CD14-positive monocyte (primary cell): ENCODE measurements at regions of chr14 and their contacts with region 1.

Region 1: GRCh38 chr14:104708606-104709268 is 15.3 kb upstream of the ADSS1 start:
- DNase-seq: peak; percentile 45 to 62 (median 61)
- H3K4me3 ChIP-seq: no peak overlapping the region
- H3K4me3 Mint-ChIP-seq: no peak overlapping the region
- H3K27ac ChIP-seq: no peak overlapping the region
- H3K27ac Mint-ChIP-seq: no peak overlapping the region
- H3K4me1 ChIP-seq: peaks cover 0 to 10% of the 10 kb centered on the region in 2 donors
- H3K4me1 Mint-ChIP-seq: peaks cover 1% of the 10 kb centered on the region
- H3K27me3 ChIP-seq: no peaks in the 10 kb centered on the region
- H3K27me3 Mint-ChIP-seq: peaks cover 0 to 1% (median 0%) of the 10 kb centered on the region in 3 donors
- CTCF ChIP-seq: peak; percentile 98

Region 2: DNA sequence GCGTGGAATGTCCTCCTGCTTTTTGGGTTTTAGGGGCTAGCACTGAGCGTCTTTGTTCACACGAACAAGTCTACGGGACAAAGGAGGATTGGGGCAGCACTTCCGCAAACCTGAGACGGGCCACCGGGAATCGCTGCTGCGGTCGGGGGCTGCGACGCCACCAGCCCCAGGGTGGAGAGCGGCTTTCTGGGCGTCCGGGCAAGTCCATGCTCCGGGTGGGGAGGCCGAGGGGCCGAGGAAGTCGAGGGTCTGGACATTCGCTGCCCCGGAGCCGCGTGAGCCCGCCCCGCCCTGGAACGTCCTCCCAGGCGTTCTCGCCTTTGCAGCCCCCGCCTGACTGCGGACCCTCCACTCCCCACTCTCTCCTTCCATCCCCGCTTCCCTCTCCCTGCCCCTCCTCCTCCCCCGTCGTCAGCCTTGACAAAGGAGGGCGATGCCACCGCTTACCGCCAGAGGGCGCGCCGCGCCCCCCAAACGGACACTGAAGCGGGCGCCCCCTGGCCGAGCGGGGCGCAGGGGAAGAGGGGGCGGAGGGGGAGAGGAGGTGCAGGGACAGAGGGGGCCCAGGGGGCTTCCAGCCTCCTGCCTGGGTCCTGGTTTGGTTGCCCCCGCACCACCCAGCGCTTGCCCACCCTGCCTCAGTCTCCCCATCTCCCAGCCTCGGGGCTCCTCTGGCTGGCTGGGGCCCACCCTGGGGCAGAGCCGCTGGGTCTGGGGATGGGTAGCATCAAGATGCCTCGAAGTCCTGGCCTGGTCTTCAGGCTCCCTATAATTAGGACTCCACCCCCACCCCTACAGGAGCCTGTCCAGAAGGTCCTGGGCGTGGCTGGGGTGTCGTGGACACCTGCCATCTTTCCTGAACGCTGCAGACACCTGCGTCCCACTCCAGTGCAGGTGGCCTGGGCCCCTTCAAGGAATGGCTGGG is 58.4 kb before region 1 on chr14:
- intact Hi-C with region 1: loop called (anchors 1 to 2 kb)
- DNase-seq: peak; percentile 15 to 42 (median 20)
- H3K4me3 ChIP-seq: peak overlapping the region; percentile 23 to 72 (median 47)
- H3K4me3 Mint-ChIP-seq: peak overlapping the region; percentile 65 to 84
- H3K27ac ChIP-seq: peak overlapping the region in 1 of 2 donors; percentile 4
- H3K27ac Mint-ChIP-seq: no peak overlapping the region
- H3K4me1 ChIP-seq: peaks cover 30% of the 10 kb centered on the region in 2 donors
- H3K4me1 Mint-ChIP-seq: peaks cover 21% of the 10 kb centered on the region
- H3K27me3 ChIP-seq: no peaks in the 10 kb centered on the region
- H3K27me3 Mint-ChIP-seq: peaks cover 0 to 3% (median 2%) of the 10 kb centered on the region in 3 donors
- CTCF ChIP-seq: peak; percentile 99

Region 3: GRCh38 chr14:104665657-104666522 is 42.8 kb before region 1 on chr14:
- intact Hi-C with region 1: loop called (anchors 1 to 5 kb)
- DNase-seq: peak in 2 of 3 donors; percentile 9 to 26
- H3K4me3 ChIP-seq: no peak overlapping the region
- H3K4me3 Mint-ChIP-seq: peak overlapping the region; percentile 53 to 63
- H3K27ac ChIP-seq: no peak overlapping the region
- H3K27ac Mint-ChIP-seq: peak overlapping the region in 1 of 7 donors; percentile 1
- H3K4me1 ChIP-seq: peaks cover 0 to 8% of the 10 kb centered on the region in 2 donors
- H3K4me1 Mint-ChIP-seq: peaks cover 7% of the 10 kb centered on the region
- H3K27me3 ChIP-seq: peaks cover 0 to 3% of the 10 kb centered on the region in 2 donors
- H3K27me3 Mint-ChIP-seq: peaks cover 7 to 17% (median 10%) of the 10 kb centered on the region in 3 donors
- CTCF ChIP-seq: peak; percentile 55

Region 4: GRCh38 chr14:105203057-105203531 is 494.4 kb after region 1 on chr14:
- intact Hi-C with region 1: no loop called
- DNase-seq: peak; percentile 42 to 59 (median 57)
- H3K4me3 ChIP-seq: no peak overlapping the region
- H3K4me3 Mint-ChIP-seq: no peak overlapping the region
- H3K27ac ChIP-seq: no peak overlapping the region
- H3K27ac Mint-ChIP-seq: no peak overlapping the region
- H3K4me1 ChIP-seq: peaks cover 21 to 25% of the 10 kb centered on the region in 2 donors
- H3K4me1 Mint-ChIP-seq: peaks cover 19% of the 10 kb centered on the region
- H3K27me3 ChIP-seq: peaks cover 0 to 52% of the 10 kb centered on the region in 2 donors
- H3K27me3 Mint-ChIP-seq: peaks cover 38 to 69% (median 38%) of the 10 kb centered on the region in 3 donors
- CTCF ChIP-seq: peak; percentile 98